Activated CD4-positive, alpha-beta memory T cell treated with anti-CD3 and anti-CD28 coated beads for 36 hours (primary cell): ENCODE measurements at regions of chr2 and their contacts with region 1.

Region 1: DNA sequence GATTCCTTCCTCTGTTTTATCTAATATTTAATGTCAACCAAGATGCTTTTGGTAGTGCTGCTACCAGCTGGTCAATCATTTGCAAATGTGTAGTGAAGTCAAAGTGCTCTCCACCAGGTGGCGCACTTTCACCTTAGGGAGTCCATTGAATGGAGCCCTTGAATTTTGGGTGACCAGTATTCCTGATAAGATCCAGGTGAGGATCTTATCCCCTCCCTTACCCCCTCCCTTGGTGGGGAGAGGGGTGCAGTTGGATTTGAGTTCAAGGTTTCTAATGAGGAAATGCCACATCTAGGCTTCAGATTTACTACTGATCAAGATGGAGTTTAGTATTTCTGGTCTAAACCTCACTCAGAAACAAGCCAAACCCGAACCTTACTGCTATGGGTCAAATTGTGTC is 12.0 kb upstream of the E2F6 start:
- DNase-seq: peak; percentile 86
- H3K4me3 Mint-ChIP-seq: no peak overlapping the region
- H3K27ac Mint-ChIP-seq: no peak overlapping the region
- H3K4me1 Mint-ChIP-seq: peaks cover under 1% of the 10 kb centered on the region
- H3K27me3 Mint-ChIP-seq: peaks cover 21% of the 10 kb centered on the region

Region 2: GRCh38 chr2:10188216-10188615 is 1289.8 kb before region 1 on chr2:
- CTCF ChIA-PET with region 1: no interaction called
- POLR2A ChIA-PET with region 1: no interaction called
- intact Hi-C with region 1: no loop called
- DNase-seq: no peak
- H3K4me3 Mint-ChIP-seq: no peak overlapping the region
- H3K27ac Mint-ChIP-seq: no peak overlapping the region
- H3K4me1 Mint-ChIP-seq: no peaks in the 10 kb centered on the region
- H3K27me3 Mint-ChIP-seq: no peaks in the 10 kb centered on the region

Region 3: DNA sequence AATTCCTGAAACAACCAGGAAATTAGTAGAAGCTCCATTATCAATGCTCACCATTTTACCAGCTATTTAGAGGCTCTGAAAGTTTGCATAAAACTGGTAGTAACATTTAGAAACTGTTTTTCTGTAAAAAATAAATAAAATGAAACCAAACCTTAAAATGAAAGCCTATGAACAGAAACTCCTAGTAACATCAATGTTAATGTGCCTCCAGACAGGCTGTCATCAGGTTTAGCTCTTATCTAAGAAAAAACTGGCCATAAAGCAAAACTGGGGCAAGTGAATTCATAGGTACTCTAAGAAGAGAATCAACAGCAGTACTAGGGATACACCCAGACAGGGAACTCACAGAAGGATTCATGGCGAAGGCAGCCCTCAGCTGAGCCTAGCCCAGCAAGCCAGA is 20.1 kb before region 1 on chr2:
- CTCF ChIA-PET with region 1: interaction called, 10 read pairs
- POLR2A ChIA-PET with region 1: no interaction called
- intact Hi-C with region 1: no loop called
- DNase-seq: no peak
- H3K4me3 Mint-ChIP-seq: no peak overlapping the region
- H3K27ac Mint-ChIP-seq: no peak overlapping the region
- H3K4me1 Mint-ChIP-seq: peaks cover 31% of the 10 kb centered on the region
- H3K27me3 Mint-ChIP-seq: no peaks in the 10 kb centered on the region

Region 4: GRCh38 chr2:11571131-11571530 is 93.1 kb after region 1 on chr2:
- CTCF ChIA-PET with region 1: no interaction called
- POLR2A ChIA-PET with region 1: no interaction called
- intact Hi-C with region 1: no loop called
- DNase-seq: no peak
- H3K4me3 Mint-ChIP-seq: no peak overlapping the region
- H3K27ac Mint-ChIP-seq: no peak overlapping the region
- H3K4me1 Mint-ChIP-seq: no peaks in the 10 kb centered on the region
- H3K27me3 Mint-ChIP-seq: peaks cover 5% of the 10 kb centered on the region

Region 5: GRCh38 chr2:11681722-11682589 is 204.0 kb after region 1 on chr2:
- CTCF ChIA-PET with region 1: no interaction called
- POLR2A ChIA-PET with region 1: no interaction called
- intact Hi-C with region 1: loop called (anchors 1 kb)
- DNase-seq: peak; percentile 77
- H3K4me3 Mint-ChIP-seq: no peak overlapping the region
- H3K27ac Mint-ChIP-seq: no peak overlapping the region
- H3K4me1 Mint-ChIP-seq: peaks cover 5% of the 10 kb centered on the region
- H3K27me3 Mint-ChIP-seq: peaks cover 26% of the 10 kb centered on the region